HepG2 (cell line): ENCODE measurements at regions of chr2 and their contacts with region 1.

Region 1: DNA sequence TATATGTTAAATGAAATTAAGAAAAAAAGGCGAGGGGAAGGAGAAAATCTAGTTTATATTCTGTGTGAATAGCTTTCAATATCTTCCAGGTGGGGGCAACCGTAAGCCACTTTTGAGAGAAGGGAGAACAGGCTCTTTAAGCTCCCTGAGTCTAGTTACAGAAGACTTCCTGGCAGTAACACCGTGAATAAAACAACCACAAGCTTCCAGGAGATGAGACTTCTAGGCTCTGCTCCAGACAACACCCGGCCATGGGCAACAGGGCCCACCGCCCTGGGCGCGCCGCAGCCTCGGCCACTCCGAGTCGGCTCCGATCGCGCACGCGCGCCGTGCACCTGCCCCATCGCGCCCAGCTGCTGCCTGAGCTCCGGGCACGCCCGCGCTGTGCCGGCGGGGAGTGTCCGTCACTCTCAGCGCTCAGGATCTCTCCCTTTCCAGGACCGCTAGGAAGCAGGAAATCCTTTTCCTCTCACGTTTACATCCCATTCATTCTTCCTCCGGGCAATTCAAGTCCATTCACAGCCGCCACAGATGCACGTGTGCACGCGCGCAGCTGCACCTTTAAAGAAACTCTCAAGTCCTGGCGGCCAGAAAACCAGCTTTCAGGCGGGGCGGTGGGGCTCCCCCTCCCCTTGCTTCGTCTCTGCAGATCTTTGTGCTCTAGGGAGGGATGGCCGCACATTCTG is 19.4 kb upstream of the PAX3 start:
- DNase-seq: peak; percentile 53
- ATAC-seq: peak; percentile 94
- H3K4me3 ChIP-seq: peak overlapping the region; percentile 55 to 75 (median 61)
- H3K27ac ChIP-seq: no peak overlapping the region
- H3K4me1 ChIP-seq: peaks cover 15% of the 10 kb centered on the region
- H3K27me3 ChIP-seq: peaks cover 12 to 48% of the 10 kb centered on the region in 2 experiments
- CTCF ChIP-seq: peak; percentile 63
- EP300 ChIP-seq: no peak
- POLR2A ChIP-seq: no peak
- RAD21 ChIP-seq: peak; percentile 64

Region 2: GRCh38 chr2:222433332-222434173 is 115.4 kb after region 1 on chr2:
- CTCF ChIA-PET with region 1: no interaction called
- POLR2A ChIA-PET with region 1: no interaction called
- in situ Hi-C with region 1: no loop called
- intact Hi-C with region 1: loop called (anchors 10 kb)
- DNase-seq: no peak
- ATAC-seq: no peak
- H3K4me3 ChIP-seq: no peak overlapping the region
- H3K27ac ChIP-seq: no peak overlapping the region
- H3K4me1 ChIP-seq: no peaks in the 10 kb centered on the region
- H3K27me3 ChIP-seq: no peaks in the 10 kb centered on the region; a peak in 2 of 5 replicates
- CTCF ChIP-seq: no peak
- EP300 ChIP-seq: no peak
- POLR2A ChIP-seq: no peak
- RAD21 ChIP-seq: no peak